ENCODE measurements at regions of chr7 and their contacts with region 1.

Region 1: GRCh38 chr7:76166404-76167255 is 35.1 kb upstream of the SRRM3 start:
- DNase-seq: peak; percentile 90 to 99
- H3K4me3 ChIP-seq: peak overlapping the region; percentile 73
- H3K27ac ChIP-seq: peak overlapping the region; percentile 75
- H3K4me1 ChIP-seq: 0 out of 2 replicates have a peak, but pooled peaks cover 4% of the 10 kb centered on the region
- H3K27me3 ChIP-seq: no peaks in the 10 kb centered on the region
- CTCF ChIP-seq: peak; percentile 30; the same call in 1 of the 2 replicates

Region 2: GRCh38 chr7:76047811-76048667 is 118.6 kb before region 1 on chr7 and contains the starts of genes MDH2 and STYXL1:
- CTCF ChIA-PET with region 1: interaction called, 3 read pairs
- POLR2A ChIA-PET with region 1: interaction called, 8 read pairs
- intact Hi-C with region 1: loop called (anchors 2 kb)
- DNase-seq: peak; percentile 93 to 97
- H3K4me3 ChIP-seq: peak within 1 kb of the TSS; percentile 89
- H3K27ac ChIP-seq: peak within 1 kb of the TSS; percentile 83
- H3K4me1 ChIP-seq: peaks cover 15% of the 10 kb centered on the region
- H3K27me3 ChIP-seq: no peaks in the 10 kb centered on the region
- CTCF ChIP-seq: no peak
- total RNA-seq, gene MDH2: 319 and 328 TPM in 2 replicates
- total RNA-seq, gene STYXL1: 77.7 and 98.2 TPM in 2 replicates

Region 3: GRCh38 chr7:76077435-76077834 is 89.2 kb before region 1 on chr7:
- CTCF ChIA-PET with region 1: no interaction called
- POLR2A ChIA-PET with region 1: interaction called, 22 read pairs
- intact Hi-C with region 1: no loop called
- DNase-seq: peak in 1 of 2 experiments; percentile 35
- H3K4me3 ChIP-seq: no peak overlapping the region
- H3K27ac ChIP-seq: no peak overlapping the region
- H3K4me1 ChIP-seq: peaks cover 23% of the 10 kb centered on the region
- H3K27me3 ChIP-seq: no peaks in the 10 kb centered on the region
- CTCF ChIP-seq: no peak

Region 4: DNA sequence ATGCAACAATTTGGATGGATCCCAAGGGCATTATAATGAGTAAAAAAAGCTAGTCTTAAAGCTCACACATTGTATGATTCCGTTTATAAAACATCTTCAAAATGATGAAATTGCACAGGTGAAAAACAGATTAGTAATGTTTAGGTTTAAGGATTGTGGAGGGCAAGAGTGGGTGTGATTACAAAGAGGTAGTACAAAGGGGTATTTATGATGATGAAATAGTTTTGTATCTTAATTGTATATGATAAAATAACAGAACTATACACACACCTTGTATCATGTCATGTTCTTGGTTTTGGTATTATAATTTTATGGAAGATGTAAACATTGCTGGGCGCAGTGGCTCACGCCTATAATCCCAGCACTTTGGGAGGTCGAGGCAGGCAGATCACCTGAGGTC is 245.6 kb after region 1 on chr7:
- CTCF ChIA-PET with region 1: no interaction called
- POLR2A ChIA-PET with region 1: interaction called, 19 read pairs
- intact Hi-C with region 1: no loop called
- DNase-seq: no peak
- H3K4me3 ChIP-seq: no peak overlapping the region
- H3K27ac ChIP-seq: no peak overlapping the region
- H3K4me1 ChIP-seq: peaks cover 4% of the 10 kb centered on the region; the same call in 1 of the 2 replicates
- H3K27me3 ChIP-seq: no peaks in the 10 kb centered on the region
- CTCF ChIP-seq: no peak

Measured in PC-9 (cell line).